ENCODE measurements at regions of chr15 and their contacts with region 1.

Region 1: GRCh38 chr15:41621200-41622193 is 38.7 kb upstream of the MGA start:
- DNase-seq: peak; percentile 57 to 75
- H3K4me3 ChIP-seq: peak overlapping the region; percentile 50
- H3K27ac ChIP-seq: peak overlapping the region; percentile 68
- H3K4me1 ChIP-seq: no peaks in the 10 kb centered on the region
- H3K27me3 ChIP-seq: no peaks in the 10 kb centered on the region
- CTCF ChIP-seq: no peak

Region 2: GRCh38 chr15:41429003-41429890 is 192.2 kb before region 1 on chr15:
- CTCF ChIA-PET with region 1: no interaction called
- POLR2A ChIA-PET with region 1: no interaction called
- intact Hi-C with region 1: no loop called
- DNase-seq: no peak
- H3K4me3 ChIP-seq: no peak overlapping the region
- H3K27ac ChIP-seq: no peak overlapping the region
- H3K4me1 ChIP-seq: no peaks in the 10 kb centered on the region
- H3K27me3 ChIP-seq: no peaks in the 10 kb centered on the region
- CTCF ChIP-seq: no peak

Region 3: GRCh38 chr15:41603941-41604911 is 17.3 kb before region 1 on chr15:
- CTCF ChIA-PET with region 1: no interaction called
- POLR2A ChIA-PET with region 1: interaction called, 22 read pairs
- intact Hi-C with region 1: no loop called
- DNase-seq: peak; percentile 44 to 45
- H3K4me3 ChIP-seq: peak overlapping the region; percentile 54
- H3K27ac ChIP-seq: no peak overlapping the region
- H3K4me1 ChIP-seq: peaks cover 7% of the 10 kb centered on the region; the same call in 1 of the 2 replicates
- H3K27me3 ChIP-seq: no peaks in the 10 kb centered on the region
- CTCF ChIP-seq: peak; percentile 80

Region 4: DNA sequence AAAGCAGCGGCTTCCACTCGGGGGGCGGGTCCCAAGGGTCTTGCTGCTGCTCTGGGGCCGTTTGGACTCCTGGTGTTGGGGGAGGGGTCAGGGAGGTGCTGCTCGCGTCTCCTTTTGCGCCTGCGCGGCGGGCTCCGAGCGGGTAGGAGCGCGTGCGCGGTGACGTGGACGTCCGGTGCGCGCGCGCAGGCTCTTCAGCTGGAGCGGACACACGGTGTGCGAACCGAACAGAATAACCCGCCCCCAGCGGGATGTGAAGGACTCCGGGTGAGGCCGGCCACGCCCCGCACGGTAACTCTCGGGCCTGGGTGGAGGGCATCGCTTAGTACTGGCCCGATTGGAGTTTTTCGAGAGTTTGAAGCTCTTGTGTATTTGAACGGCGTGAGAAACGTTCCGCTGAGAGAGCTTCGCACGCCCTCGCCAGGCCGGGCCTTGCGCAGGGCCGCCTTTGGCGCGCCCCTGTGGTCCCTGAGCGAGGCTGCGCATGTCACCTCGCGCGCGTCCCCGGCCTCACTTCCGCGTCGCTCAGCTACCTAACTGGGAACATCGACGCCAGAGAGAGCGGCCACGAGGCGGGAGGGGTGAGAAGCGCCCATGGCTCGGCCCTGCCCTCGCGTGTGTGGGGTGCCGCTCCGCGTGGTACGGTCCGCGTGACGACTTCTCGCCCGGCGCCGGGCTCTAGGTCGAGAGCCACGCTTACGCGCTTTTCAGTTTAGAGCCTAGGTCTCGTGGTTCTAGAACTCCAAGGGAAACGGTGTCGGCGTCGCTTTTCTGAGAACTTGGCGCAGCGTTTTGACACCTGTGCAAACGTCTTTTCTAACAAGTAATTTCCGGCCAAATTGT is 39.0 kb after region 1 on chr15 and contains the start of gene MGA:
- CTCF ChIA-PET with region 1: no interaction called
- POLR2A ChIA-PET with region 1: no interaction called
- intact Hi-C with region 1: loop called (anchors 5 kb)
- DNase-seq: peak; percentile 74 to 84
- H3K4me3 ChIP-seq: peak within 1 kb of the TSS; percentile 63
- H3K27ac ChIP-seq: peak within 1 kb of the TSS; percentile 85
- H3K4me1 ChIP-seq: peaks cover 11% of the 10 kb centered on the region
- H3K27me3 ChIP-seq: no peaks in the 10 kb centered on the region
- CTCF ChIP-seq: no peak
- total RNA-seq, gene MGA: 31.8 and 38.5 TPM in 2 replicates

Region 5: DNA sequence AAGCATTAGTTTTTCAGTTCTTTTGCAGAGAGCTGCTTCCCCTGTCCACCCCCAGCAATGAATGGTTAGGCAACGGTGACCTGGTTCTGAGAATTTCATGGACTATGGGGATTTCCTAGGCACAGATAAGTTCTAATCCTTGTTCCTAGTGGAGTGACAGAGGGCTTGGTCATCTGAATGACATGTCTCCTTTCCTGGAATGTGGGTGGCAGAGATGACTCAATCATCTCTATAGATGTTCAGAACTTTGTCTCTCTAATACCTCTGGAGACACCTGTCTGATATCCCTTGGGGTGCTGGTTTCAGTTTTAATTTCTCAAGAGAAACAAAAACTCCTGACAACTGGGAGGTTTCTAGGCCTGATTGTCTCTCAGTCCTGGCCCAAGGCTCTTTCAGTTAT is 388.9 kb after region 1 on chr15:
- CTCF ChIA-PET with region 1: no interaction called
- POLR2A ChIA-PET with region 1: no interaction called
- intact Hi-C with region 1: no loop called
- DNase-seq: peak in 1 of 2 experiments; percentile 68
- H3K4me3 ChIP-seq: no peak overlapping the region
- H3K27ac ChIP-seq: peak overlapping the region; percentile 66
- H3K4me1 ChIP-seq: peaks cover 33% of the 10 kb centered on the region
- H3K27me3 ChIP-seq: no peaks in the 10 kb centered on the region
- CTCF ChIP-seq: no peak